CD4-positive, alpha-beta T cell (primary cell): ENCODE measurements at regions of chr10 and their contacts with region 1.

Region 1: GRCh38 chr10:102394079-102394800 is 1.3 kb upstream of the NFKB2 start:
- DNase-seq: peak; percentile 95 to 99 (median 98)
- ATAC-seq: peak; percentile 72
- H3K4me3 ChIP-seq: peak overlapping the region; percentile 64
- H3K4me3 Mint-ChIP-seq: peak overlapping the region; percentile 92
- H3K27ac ChIP-seq: peak overlapping the region; percentile 97 to 100
- H3K27ac Mint-ChIP-seq: peak overlapping the region; percentile 100
- H3K4me1 ChIP-seq: peaks cover 57% of the 10 kb centered on the region
- H3K4me1 Mint-ChIP-seq: peaks cover 47% of the 10 kb centered on the region
- H3K27me3 ChIP-seq: no peaks in the 10 kb centered on the region
- H3K27me3 Mint-ChIP-seq: no peaks in the 10 kb centered on the region
- CTCF ChIP-seq: peak; percentile 12

Region 2: GRCh38 chr10:100715445-100716385 is 1678.5 kb before region 1 on chr10:
- CTCF ChIA-PET with region 1: no interaction called
- POLR2A ChIA-PET with region 1: no interaction called
- intact Hi-C with region 1: no loop called
- DNase-seq: no peak
- ATAC-seq: no peak
- H3K4me3 ChIP-seq: no peak overlapping the region
- H3K4me3 Mint-ChIP-seq: no peak overlapping the region
- H3K27ac ChIP-seq: no peak overlapping the region
- H3K27ac Mint-ChIP-seq: no peak overlapping the region
- H3K4me1 ChIP-seq: peaks cover 10% of the 10 kb centered on the region
- H3K4me1 Mint-ChIP-seq: peaks cover 17% of the 10 kb centered on the region
- H3K27me3 ChIP-seq: peaks cover 65 to 90% of the 10 kb centered on the region in 2 experiments
- H3K27me3 Mint-ChIP-seq: peaks cover 94% of the 10 kb centered on the region
- CTCF ChIP-seq: no peak

Region 3: GRCh38 chr10:101042667-101043355 is 1351.4 kb before region 1 on chr10:
- CTCF ChIA-PET with region 1: no interaction called
- POLR2A ChIA-PET with region 1: no interaction called
- intact Hi-C with region 1: no loop called
- DNase-seq: peak; percentile 58 to 93 (median 77)
- ATAC-seq: peak; percentile 74
- H3K4me3 ChIP-seq: peak overlapping the region; percentile 66
- H3K4me3 Mint-ChIP-seq: peak overlapping the region; percentile 95
- H3K27ac ChIP-seq: peak overlapping the region in 1 of 2 donors; percentile 39
- H3K27ac Mint-ChIP-seq: peak overlapping the region; percentile 76
- H3K4me1 ChIP-seq: peaks cover 24% of the 10 kb centered on the region
- H3K4me1 Mint-ChIP-seq: peaks cover 26% of the 10 kb centered on the region
- H3K27me3 ChIP-seq: peaks cover 10 to 15% of the 10 kb centered on the region in 2 experiments
- H3K27me3 Mint-ChIP-seq: peaks cover 17% of the 10 kb centered on the region
- CTCF ChIP-seq: no peak

Region 4: GRCh38 chr10:102225646-102226541 is 168.3 kb before region 1 on chr10 and contains the start of gene ELOVL3:
- CTCF ChIA-PET with region 1: interaction called, 11 read pairs
- POLR2A ChIA-PET with region 1: interaction called, 22 read pairs
- intact Hi-C with region 1: loop called in 1 of 2 experiments (anchors 2 kb)
- DNase-seq: peak; percentile 64 to 93 (median 80)
- ATAC-seq: peak; percentile 92
- H3K4me3 ChIP-seq: peak within 1 kb of the TSS; percentile 44
- H3K4me3 Mint-ChIP-seq: peak within 1 kb of the TSS; percentile 68
- H3K27ac ChIP-seq: no peak within 1 kb of the TSS
- H3K27ac Mint-ChIP-seq: no peak within 1 kb of the TSS
- H3K4me1 ChIP-seq: peaks cover 28% of the 10 kb centered on the region
- H3K4me1 Mint-ChIP-seq: peaks cover 18% of the 10 kb centered on the region
- H3K27me3 ChIP-seq: peaks cover 22 to 31% of the 10 kb centered on the region in 2 experiments
- H3K27me3 Mint-ChIP-seq: peaks cover 69% of the 10 kb centered on the region
- CTCF ChIP-seq: no peak
- total RNA-seq, gene ELOVL3: not detected

Region 5: DNA sequence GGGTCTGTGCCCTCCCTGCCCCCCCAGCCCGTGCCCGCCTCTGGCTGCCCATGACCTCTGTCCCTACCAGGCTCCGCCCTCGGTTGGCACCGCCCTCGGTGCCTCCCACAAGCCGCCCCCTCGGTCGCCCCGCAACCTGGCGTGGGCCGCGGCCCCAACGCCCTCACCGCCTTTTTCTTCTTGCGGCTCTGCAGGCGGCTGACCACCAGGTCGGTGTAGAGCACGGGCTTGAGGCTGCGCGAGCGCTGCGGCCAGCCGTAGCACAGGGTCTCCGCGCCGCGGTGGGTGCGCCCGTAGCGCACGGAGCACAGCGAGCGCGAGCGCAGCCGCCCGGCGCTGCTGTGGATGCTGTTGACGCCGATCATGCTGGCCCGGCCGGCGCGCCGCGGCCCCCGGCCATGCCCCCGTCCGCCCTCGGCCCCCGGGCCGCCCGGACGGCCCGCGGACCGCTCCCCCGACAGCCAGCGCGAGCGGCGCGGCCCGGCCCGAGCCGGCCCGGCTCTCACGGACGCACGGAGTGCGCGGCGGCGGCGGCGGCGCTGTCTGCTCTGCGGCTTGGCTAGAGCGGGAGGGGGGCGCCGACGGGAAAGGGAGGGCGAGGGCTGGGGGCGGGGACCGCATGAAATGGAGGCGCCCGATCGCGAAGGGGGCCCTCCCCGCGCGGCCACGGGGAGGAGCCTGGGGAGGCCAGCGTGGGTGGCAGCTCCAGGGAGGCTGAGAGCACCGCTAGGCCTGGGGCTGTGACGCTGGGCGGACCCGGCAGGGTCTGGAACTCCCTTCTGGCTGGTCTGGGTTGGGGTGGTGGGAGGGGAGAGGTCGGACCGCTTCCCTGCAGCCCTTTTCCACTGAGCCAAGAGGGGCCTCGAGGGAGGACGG is 14.7 kb after region 1 on chr10:
- CTCF ChIA-PET with region 1: interaction called, 13 read pairs
- POLR2A ChIA-PET with region 1: interaction called, 21 read pairs
- intact Hi-C with region 1: loop called in 1 of 2 experiments (anchors 1 kb)
- DNase-seq: peak; percentile 57 to 89 (median 74)
- ATAC-seq: peak; percentile 69
- H3K4me3 ChIP-seq: peak overlapping the region; percentile 54
- H3K4me3 Mint-ChIP-seq: peak overlapping the region; percentile 87
- H3K27ac ChIP-seq: peak overlapping the region in 1 of 2 donors; percentile 0
- H3K27ac Mint-ChIP-seq: peak overlapping the region; percentile 85
- H3K4me1 ChIP-seq: peaks cover 53% of the 10 kb centered on the region
- H3K4me1 Mint-ChIP-seq: peaks cover 56% of the 10 kb centered on the region
- H3K27me3 ChIP-seq: peaks cover 8 to 18% of the 10 kb centered on the region in 2 experiments
- H3K27me3 Mint-ChIP-seq: peaks cover 37% of the 10 kb centered on the region
- CTCF ChIP-seq: no peak

Region 6: DNA sequence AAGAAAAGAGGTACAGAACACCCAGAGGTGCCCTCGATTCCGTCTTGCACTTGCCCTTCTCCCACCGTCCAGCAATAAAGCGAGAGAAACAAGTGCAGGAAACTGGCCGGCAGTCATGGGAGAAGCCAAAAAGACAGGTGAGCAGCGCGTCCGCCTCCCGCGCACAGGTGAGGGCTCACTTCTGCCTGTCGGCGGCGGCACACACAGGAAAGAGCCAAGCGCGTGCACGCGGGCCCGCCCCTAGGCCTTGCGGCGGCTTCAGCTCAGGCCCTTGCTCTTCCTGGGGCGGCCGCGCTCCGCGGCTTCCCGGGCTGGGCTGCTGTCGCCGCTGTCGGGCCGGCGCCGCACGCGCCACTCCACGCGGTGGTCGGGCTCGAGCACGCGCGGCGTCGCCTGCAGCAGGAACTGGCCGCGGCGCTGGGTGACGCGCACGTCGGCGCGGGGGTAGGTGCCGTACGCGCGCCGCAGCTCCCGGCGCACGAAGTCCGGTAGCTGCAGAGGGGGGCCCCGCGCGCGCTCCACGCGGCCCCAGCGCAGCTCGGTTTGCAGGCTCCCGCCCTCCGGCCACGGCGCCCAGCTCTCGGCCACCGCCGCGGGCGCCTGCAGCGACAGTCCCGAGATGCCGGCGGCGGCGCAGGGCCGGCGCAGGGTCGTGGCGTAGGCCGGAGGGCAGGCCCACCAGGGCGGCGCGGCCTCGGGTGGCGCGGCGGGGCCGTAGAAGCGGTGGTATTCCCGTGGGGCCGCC is 56.1 kb after region 1 on chr10:
- CTCF ChIA-PET with region 1: interaction called, 7 read pairs
- POLR2A ChIA-PET with region 1: interaction called, 59 read pairs
- intact Hi-C with region 1: loop called (anchors 1 kb)
- DNase-seq: peak; percentile 78 to 98 (median 88)
- ATAC-seq: peak; percentile 77
- H3K4me3 ChIP-seq: peak overlapping the region; percentile 83
- H3K4me3 Mint-ChIP-seq: peak overlapping the region; percentile 94
- H3K27ac ChIP-seq: peak overlapping the region; percentile 79 to 80
- H3K27ac Mint-ChIP-seq: peak overlapping the region; percentile 78
- H3K4me1 ChIP-seq: peaks cover 41% of the 10 kb centered on the region
- H3K4me1 Mint-ChIP-seq: peaks cover 21% of the 10 kb centered on the region
- H3K27me3 ChIP-seq: no peaks in the 10 kb centered on the region
- H3K27me3 Mint-ChIP-seq: no peaks in the 10 kb centered on the region
- CTCF ChIP-seq: no peak

Region 7: GRCh38 chr10:102480396-102480795 is 86.2 kb after region 1 on chr10:
- CTCF ChIA-PET with region 1: interaction called, 17 read pairs
- POLR2A ChIA-PET with region 1: interaction called, 20 read pairs
- intact Hi-C with region 1: loop called (anchors 1 kb)
- DNase-seq: no peak
- ATAC-seq: no peak
- H3K4me3 ChIP-seq: no peak overlapping the region
- H3K4me3 Mint-ChIP-seq: peak overlapping the region; percentile 15
- H3K27ac ChIP-seq: no peak overlapping the region
- H3K27ac Mint-ChIP-seq: no peak overlapping the region
- H3K4me1 ChIP-seq: peaks cover 16% of the 10 kb centered on the region
- H3K4me1 Mint-ChIP-seq: peaks cover 17% of the 10 kb centered on the region
- H3K27me3 ChIP-seq: no peaks in the 10 kb centered on the region
- H3K27me3 Mint-ChIP-seq: no peaks in the 10 kb centered on the region
- CTCF ChIP-seq: no peak

Region 8: GRCh38 chr10:102641880-102642735 is 247.9 kb after region 1 on chr10:
- CTCF ChIA-PET with region 1: interaction called, 4 read pairs
- POLR2A ChIA-PET with region 1: interaction called, 8 read pairs
- intact Hi-C with region 1: loop called (anchors 1 to 10 kb)
- DNase-seq: peak; percentile 94 to 100 (median 98)
- ATAC-seq: peak; percentile 70
- H3K4me3 ChIP-seq: peak overlapping the region; percentile 75
- H3K4me3 Mint-ChIP-seq: peak overlapping the region; percentile 96
- H3K27ac ChIP-seq: peak overlapping the region; percentile 95 to 96
- H3K27ac Mint-ChIP-seq: peak overlapping the region; percentile 95
- H3K4me1 ChIP-seq: peaks cover 28% of the 10 kb centered on the region
- H3K4me1 Mint-ChIP-seq: peaks cover 31% of the 10 kb centered on the region
- H3K27me3 ChIP-seq: no peaks in the 10 kb centered on the region
- H3K27me3 Mint-ChIP-seq: no peaks in the 10 kb centered on the region
- CTCF ChIP-seq: no peak